ENCODE measurements at regions of chr5 and their contacts with region 1.

Region 1: DNA sequence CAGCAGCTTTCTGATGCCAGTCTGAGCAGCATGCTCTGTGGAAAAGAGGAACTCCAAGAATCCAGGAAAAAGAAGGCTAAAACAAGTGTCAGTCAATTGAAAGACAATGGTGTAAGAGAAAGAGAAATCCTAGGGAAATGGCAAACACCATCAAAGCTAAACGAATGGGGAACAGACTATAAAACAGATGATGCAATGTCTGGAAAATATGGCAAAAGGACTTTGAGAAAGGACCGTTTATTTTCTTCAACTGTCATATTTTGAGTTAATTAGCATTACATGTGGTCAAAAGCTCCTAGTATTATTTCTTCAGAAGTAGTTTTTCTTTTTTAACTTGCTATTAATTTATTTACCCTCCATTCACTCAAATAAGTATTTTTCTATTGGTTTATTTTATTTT is 465.2 kb downstream of the LRRC70 start:
- DNase-seq: no peak
- ATAC-seq: no peak

Region 2: GRCh38 chr5:62922191-62922590 is 121.6 kb before region 1 on chr5:
- intact Hi-C with region 1: no loop called
- DNase-seq: no peak
- ATAC-seq: no peak

Region 3: GRCh38 chr5:62969409-62970120 is 74.2 kb before region 1 on chr5:
- intact Hi-C with region 1: no loop called
- DNase-seq: no peak
- ATAC-seq: peak; percentile 58

Region 4: DNA sequence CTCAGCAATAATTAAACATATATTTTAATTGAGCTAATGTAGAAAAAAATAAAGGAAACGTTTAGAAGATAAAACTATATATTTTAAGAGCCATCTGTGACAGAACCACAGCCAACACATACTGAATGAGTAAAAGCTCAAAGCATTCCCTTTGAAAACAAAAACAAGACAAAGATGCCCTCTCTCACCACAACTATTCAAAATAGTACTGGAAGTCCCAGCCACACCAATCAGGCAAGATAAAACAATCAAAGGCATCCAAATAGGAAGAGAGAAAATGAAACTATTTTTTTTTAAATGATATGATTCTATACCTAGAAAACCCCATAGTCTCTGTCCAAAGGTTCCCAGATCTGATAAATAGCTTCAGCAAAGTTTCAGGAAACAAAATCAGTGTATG is 656.4 kb after region 1 on chr5:
- intact Hi-C with region 1: loop called (anchors 10 kb)
- DNase-seq: no peak
- ATAC-seq: no peak

Measured in sciatic nerve (tissue), 2 donors.